Right ventricle myocardium superior (tissue), 1 donor: ENCODE measurements at regions of chr6 and their contacts with region 1.

Region 1: DNA sequence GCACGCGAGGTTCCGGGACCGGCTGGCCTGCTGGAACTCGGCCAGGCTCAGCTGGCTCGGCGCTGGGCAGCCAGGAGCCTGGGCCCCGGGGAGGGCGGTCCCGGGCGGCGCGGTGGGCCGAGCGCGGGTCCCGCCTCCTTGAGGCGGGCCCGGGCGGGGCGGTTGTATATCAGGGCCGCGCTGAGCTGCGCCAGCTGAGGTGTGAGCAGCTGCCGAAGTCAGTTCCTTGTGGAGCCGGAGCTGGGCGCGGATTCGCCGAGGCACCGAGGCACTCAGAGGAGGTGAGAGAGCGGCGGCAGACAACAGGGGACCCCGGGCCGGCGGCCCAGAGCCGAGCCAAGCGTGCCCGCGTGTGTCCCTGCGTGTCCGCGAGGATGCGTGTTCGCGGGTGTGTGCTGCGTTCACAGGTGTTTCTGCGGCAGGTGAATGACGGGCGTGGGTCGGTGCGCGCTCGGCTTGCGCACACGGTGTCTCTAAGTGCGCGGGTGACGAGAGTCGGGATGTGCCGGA is at the start of gene CDKN1A:
- DNase-seq: peak; percentile 95
- ATAC-seq: peak; percentile 84
- total RNA-seq, gene CDKN1A: 54.5 TPM

Region 2: GRCh38 chr6:36633915-36634314 is 44.7 kb before region 1 on chr6:
- intact Hi-C with region 1: loop called (anchors 5 kb)
- DNase-seq: peak; percentile 83
- ATAC-seq: peak; percentile 65

Region 3: GRCh38 chr6:36839749-36840431 is 161.3 kb after region 1 on chr6:
- intact Hi-C with region 1: no loop called
- DNase-seq: peak; percentile 77
- ATAC-seq: peak; percentile 10